RWPE1 (cell line): ENCODE measurements at regions of chr18 and their contacts with region 1.

Region 1: GRCh38 chr18:7038330-7038851 is 79.2 kb downstream of the LAMA1 start:
- DNase-seq: peak; percentile 85
- H3K27ac ChIP-seq: peak overlapping the region; percentile 89
- CTCF ChIP-seq: peak; percentile 81

Region 2: GRCh38 chr18:7177116-7177744 is 138.8 kb after region 1 on chr18:
- CTCF ChIA-PET with region 1: interaction called, 12 read pairs
- POLR2A ChIA-PET with region 1: no interaction called
- DNase-seq: peak; percentile 70
- H3K27ac ChIP-seq: no peak overlapping the region
- CTCF ChIP-seq: peak; percentile 80

Region 3: GRCh38 chr18:7196421-7196820 is 158.0 kb after region 1 on chr18:
- CTCF ChIA-PET with region 1: no interaction called
- POLR2A ChIA-PET with region 1: no interaction called
- DNase-seq: no peak
- H3K27ac ChIP-seq: no peak overlapping the region
- CTCF ChIP-seq: no peak

Region 4: DNA sequence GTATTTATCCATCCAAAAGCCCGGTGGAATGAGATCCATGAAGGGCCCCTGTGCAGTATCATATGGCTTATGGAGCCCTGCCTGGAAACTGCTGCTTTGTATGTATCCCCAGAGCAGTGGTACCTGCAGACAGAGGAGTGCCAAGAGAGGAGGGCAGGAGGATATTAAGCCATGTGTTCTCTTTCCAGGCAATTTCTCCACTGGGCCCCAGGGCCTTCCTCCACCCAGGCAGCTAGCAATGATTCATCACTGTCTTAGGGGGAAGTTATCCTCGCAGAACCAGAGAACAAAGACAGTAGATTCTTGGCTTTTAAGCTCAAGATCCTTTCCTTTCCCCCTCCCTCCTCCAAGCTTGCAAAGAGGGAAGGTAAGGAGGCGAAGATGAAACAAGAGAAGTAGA is 290.6 kb after region 1 on chr18:
- CTCF ChIA-PET with region 1: no interaction called
- POLR2A ChIA-PET with region 1: no interaction called
- DNase-seq: peak; percentile 50
- H3K27ac ChIP-seq: no peak overlapping the region
- CTCF ChIP-seq: no peak